GM12878 (cell line): ENCODE measurements at regions of chr7 and their contacts with region 1.

Region 1: GRCh38 chr7:3446786-3447185 is 145.7 kb downstream of the SDK1 start:
- DNase-seq: no peak
- ATAC-seq: no peak
- H3K4me3 ChIP-seq: no peak overlapping the region
- H3K27ac ChIP-seq: no peak overlapping the region
- H3K4me1 ChIP-seq: no peaks in the 10 kb centered on the region
- H3K27me3 ChIP-seq: no peaks in the 10 kb centered on the region
- CTCF ChIP-seq: no peak
- EP300 ChIP-seq: no peak
- POLR2A ChIP-seq: no peak
- RAD21 ChIP-seq: no peak

Region 2: DNA sequence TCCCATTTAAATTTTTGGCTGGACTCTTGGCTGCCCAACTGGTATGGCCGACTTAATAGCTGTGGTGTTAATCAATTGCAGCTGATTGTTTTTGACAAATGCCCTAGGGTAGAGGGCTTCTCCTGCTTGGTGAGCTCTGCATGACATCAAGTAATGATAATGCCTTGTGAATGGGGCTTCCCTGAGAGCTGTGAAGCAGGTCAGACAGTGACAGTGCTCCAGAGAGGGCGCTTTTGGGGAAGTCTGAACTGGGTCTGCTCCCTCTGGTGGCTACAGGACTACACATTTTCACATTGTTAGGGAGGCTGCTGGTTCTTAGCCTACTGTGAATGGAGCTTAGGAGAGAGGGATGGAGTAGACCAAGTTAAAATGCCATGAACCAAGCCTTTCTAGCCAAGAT is 46.9 kb before region 1 on chr7:
- CTCF ChIA-PET with region 1: interaction called, 3 read pairs
- POLR2A ChIA-PET with region 1: no interaction called
- RAD21 ChIA-PET with region 1: no interaction called
- SMC1A ChIA-PET with region 1: no interaction called
- in situ Hi-C with region 1: no loop called
- intact Hi-C with region 1: loop called (anchors 5 kb)
- DNase-seq: no peak
- ATAC-seq: peak; percentile 46
- H3K4me3 ChIP-seq: no peak overlapping the region
- H3K27ac ChIP-seq: no peak overlapping the region
- H3K4me1 ChIP-seq: no peaks in the 10 kb centered on the region
- H3K27me3 ChIP-seq: no peaks in the 10 kb centered on the region
- CTCF ChIP-seq: peak; percentile 10 to 26 (median 10); a peak in 2 of 6 replicates
- EP300 ChIP-seq: no peak
- POLR2A ChIP-seq: no peak
- RAD21 ChIP-seq: no peak

Region 3: GRCh38 chr7:3482147-3482964 is 35.6 kb after region 1 on chr7:
- CTCF ChIA-PET with region 1: no interaction called
- POLR2A ChIA-PET with region 1: no interaction called
- RAD21 ChIA-PET with region 1: no interaction called
- SMC1A ChIA-PET with region 1: no interaction called
- in situ Hi-C with region 1: no loop called
- intact Hi-C with region 1: no loop called
- DNase-seq: no peak
- ATAC-seq: no peak
- H3K4me3 ChIP-seq: no peak overlapping the region
- H3K27ac ChIP-seq: no peak overlapping the region
- H3K4me1 ChIP-seq: no peaks in the 10 kb centered on the region
- H3K27me3 ChIP-seq: no peaks in the 10 kb centered on the region
- CTCF ChIP-seq: peak; percentile 8 to 23 (median 11); a peak in 1 of 6 replicates
- EP300 ChIP-seq: no peak
- POLR2A ChIP-seq: no peak
- RAD21 ChIP-seq: no peak

Region 4: GRCh38 chr7:4883374-4884144 is 1436.8 kb after region 1 on chr7 and contains the start of gene RADIL:
- CTCF ChIA-PET with region 1: no interaction called
- POLR2A ChIA-PET with region 1: no interaction called
- RAD21 ChIA-PET with region 1: no interaction called
- SMC1A ChIA-PET with region 1: no interaction called
- in situ Hi-C with region 1: no loop called
- intact Hi-C with region 1: no loop called
- DNase-seq: no peak
- ATAC-seq: peak; percentile 72
- H3K4me3 ChIP-seq: no peak within 1 kb of the TSS
- H3K27ac ChIP-seq: no peak within 1 kb of the TSS
- H3K4me1 ChIP-seq: no peaks in the 10 kb centered on the region
- H3K27me3 ChIP-seq: peaks cover 3% of the 10 kb centered on the region in 2 experiments
- CTCF ChIP-seq: peak in 2 of 3 experiments; percentile 38 to 44; a peak in 5 of 6 replicates
- EP300 ChIP-seq: no peak
- POLR2A ChIP-seq: no peak
- RAD21 ChIP-seq: peak; percentile 38; the same call in 1 of the 2 replicates
- polyA plus RNA-seq, gene RADIL: not detected